ENCODE measurements at regions of chr12 and their contacts with region 1.

Region 1: DNA sequence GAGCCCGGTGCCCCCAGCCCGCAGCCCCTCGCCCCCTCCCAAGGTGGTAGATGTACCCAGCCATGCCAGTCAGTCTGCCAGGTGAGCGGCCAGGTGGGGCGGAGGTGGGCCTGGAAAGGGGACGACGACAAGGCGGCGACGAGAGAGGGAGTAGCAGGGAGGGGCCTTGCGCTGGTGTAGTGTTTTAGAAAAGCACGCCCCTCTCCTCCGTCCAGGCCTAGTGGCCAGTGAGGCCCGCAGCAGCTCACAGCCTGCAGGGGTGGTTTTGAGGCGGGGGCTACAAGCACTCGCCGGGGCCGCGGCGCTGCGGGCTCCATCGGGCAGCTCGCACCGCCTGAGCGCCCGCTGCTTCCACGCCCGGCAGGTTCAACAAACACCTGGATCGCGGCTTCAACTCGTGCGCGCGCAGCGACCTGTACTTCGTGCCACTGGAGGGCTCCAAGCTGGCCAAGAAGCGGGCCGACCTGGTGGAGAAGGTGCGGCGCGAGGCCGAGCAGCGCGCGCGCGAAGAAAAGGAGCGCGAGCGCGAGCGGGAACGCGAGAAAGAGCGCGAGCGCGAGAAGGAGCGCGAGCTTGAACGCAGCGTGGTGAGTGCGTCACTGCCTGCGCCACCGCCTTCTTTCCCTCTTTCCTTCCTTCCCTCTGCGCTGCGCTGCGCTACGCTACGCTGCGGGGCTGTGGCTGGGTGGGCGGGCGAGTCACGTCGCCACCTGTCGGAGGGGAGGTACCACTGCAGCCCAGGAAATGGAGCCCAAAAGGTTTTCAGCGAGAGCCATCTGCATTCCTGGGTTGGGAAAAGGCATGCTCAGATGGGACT is 5.9 kb upstream of the RNU7-1 start:
- DNase-seq: peak; percentile 86 to 99 (median 92)
- ATAC-seq: peak; percentile 91
- H3K4me3 ChIP-seq: peak overlapping the region; percentile 72
- H3K4me3 Mint-ChIP-seq: peak overlapping the region; percentile 90
- H3K27ac ChIP-seq: peak overlapping the region; percentile 89 to 92
- H3K27ac Mint-ChIP-seq: peak overlapping the region; percentile 95
- H3K4me1 ChIP-seq: peaks cover 47% of the 10 kb centered on the region
- H3K4me1 Mint-ChIP-seq: peaks cover 61% of the 10 kb centered on the region
- H3K27me3 ChIP-seq: no peaks in the 10 kb centered on the region
- H3K27me3 Mint-ChIP-seq: no peaks in the 10 kb centered on the region
- CTCF ChIP-seq: peak; percentile 89

Region 2: DNA sequence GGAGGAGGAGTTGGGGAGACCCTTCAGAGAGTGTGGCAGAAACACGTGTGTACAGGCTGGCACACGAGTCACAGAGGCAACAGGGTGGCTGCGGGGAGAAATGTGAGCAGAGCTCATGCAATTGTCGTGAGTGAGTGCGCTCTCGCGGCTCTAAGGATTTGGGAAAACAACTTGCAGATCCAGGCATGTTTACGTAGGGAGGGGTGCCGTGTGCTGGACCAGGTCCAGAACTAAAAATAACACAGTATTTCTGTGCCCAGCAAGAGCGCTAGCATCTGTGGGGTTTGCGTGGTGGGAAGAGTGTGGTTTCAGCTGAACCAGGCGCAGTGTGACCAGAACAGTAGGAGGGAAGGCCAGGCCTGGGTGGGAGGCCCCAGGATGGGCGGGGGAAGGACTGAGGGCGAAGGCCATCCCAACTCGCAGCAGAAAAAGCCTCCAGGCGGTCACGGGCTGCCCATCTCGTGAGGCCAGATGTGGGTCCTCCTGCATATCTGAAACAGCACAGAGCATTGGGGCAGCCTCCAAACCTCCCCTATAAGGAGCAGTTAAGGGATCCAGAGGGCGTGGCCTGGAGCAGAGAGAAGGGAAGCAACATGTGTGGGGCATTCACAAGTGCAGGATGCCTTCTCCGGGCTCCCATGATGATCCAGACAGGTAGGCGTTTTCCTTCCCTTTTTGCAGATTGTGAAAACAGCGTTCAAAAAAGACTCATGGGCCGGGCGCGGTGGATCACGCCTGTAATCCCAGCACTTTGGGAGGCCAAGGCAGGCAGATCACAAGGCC is 755.4 kb before region 1 on chr12:
- CTCF ChIA-PET with region 1: no interaction called
- POLR2A ChIA-PET with region 1: no interaction called
- intact Hi-C with region 1: no loop called
- DNase-seq: no peak
- ATAC-seq: no peak
- H3K4me3 ChIP-seq: no peak overlapping the region
- H3K4me3 Mint-ChIP-seq: no peak overlapping the region
- H3K27ac ChIP-seq: no peak overlapping the region
- H3K27ac Mint-ChIP-seq: no peak overlapping the region
- H3K4me1 ChIP-seq: no peaks in the 10 kb centered on the region
- H3K4me1 Mint-ChIP-seq: no peaks in the 10 kb centered on the region
- H3K27me3 ChIP-seq: peaks cover 0 to 4% of the 10 kb centered on the region in 2 experiments
- H3K27me3 Mint-ChIP-seq: no peaks in the 10 kb centered on the region
- CTCF ChIP-seq: no peak

Region 3: GRCh38 chr12:6723607-6724396 is 213.9 kb before region 1 on chr12 and contains the start of gene COPS7A:
- CTCF ChIA-PET with region 1: interaction called, 6 read pairs
- POLR2A ChIA-PET with region 1: interaction called, 10 read pairs
- intact Hi-C with region 1: no loop called
- DNase-seq: peak; percentile 81 to 99 (median 93)
- ATAC-seq: peak; percentile 84
- H3K4me3 ChIP-seq: peak within 1 kb of the TSS; percentile 59
- H3K4me3 Mint-ChIP-seq: peak within 1 kb of the TSS; percentile 87
- H3K27ac ChIP-seq: peak within 1 kb of the TSS; percentile 68 to 88
- H3K27ac Mint-ChIP-seq: peak within 1 kb of the TSS; percentile 83
- H3K4me1 ChIP-seq: peaks cover 18% of the 10 kb centered on the region
- H3K4me1 Mint-ChIP-seq: peaks cover 28% of the 10 kb centered on the region
- H3K27me3 ChIP-seq: no peaks in the 10 kb centered on the region
- H3K27me3 Mint-ChIP-seq: no peaks in the 10 kb centered on the region
- CTCF ChIP-seq: no peak
- total RNA-seq, gene COPS7A: 9.4 to 9.6 TPM

Region 4: DNA sequence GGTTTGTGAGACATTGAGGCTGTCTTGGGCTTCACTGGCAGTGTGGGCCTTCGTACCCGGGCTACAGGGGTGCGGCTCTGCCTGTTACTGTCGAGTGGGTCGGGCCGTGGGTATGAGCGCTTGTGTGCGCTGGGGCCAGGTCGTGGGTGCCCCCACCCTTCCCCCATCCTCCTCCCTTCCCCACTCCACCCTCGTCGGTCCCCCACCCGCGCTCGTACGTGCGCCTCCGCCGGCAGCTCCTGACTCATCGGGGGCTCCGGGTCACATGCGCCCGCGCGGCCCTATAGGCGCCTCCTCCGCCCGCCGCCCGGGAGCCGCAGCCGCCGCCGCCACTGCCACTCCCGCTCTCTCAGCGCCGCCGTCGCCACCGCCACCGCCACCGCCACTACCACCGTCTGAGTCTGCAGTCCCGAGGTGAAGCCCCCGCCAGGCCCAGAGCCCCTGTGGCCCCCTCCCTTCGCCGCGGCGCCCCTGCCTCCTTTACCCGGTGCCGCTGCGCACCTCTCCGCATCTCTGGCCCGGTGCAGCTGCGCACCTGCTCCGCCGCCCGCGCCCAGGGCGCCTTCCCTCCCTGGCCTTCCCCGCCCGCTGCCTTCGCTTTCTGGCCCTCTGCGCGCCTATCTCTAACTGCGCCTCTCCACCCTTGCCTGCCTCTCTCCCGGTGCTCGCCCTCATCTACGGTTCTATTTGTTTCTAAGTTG is 23.3 kb before region 1 on chr12 and contains the start of gene ENO2:
- CTCF ChIA-PET with region 1: interaction called, 13 read pairs
- POLR2A ChIA-PET with region 1: interaction called, 35 read pairs
- intact Hi-C with region 1: no loop called
- DNase-seq: peak; percentile 72 to 93 (median 86)
- ATAC-seq: peak; percentile 93
- H3K4me3 ChIP-seq: peak within 1 kb of the TSS; percentile 65
- H3K4me3 Mint-ChIP-seq: peak within 1 kb of the TSS; percentile 94
- H3K27ac ChIP-seq: peak within 1 kb of the TSS; percentile 84 to 90
- H3K27ac Mint-ChIP-seq: peak within 1 kb of the TSS; percentile 82
- H3K4me1 ChIP-seq: peaks cover 32% of the 10 kb centered on the region
- H3K4me1 Mint-ChIP-seq: peaks cover 31% of the 10 kb centered on the region
- H3K27me3 ChIP-seq: no peaks in the 10 kb centered on the region
- H3K27me3 Mint-ChIP-seq: no peaks in the 10 kb centered on the region
- CTCF ChIP-seq: no peak
- total RNA-seq, gene ENO2: 85.6 to 103 TPM

Region 5: GRCh38 chr12:6953442-6954315 is 16.0 kb after region 1 on chr12:
- CTCF ChIA-PET with region 1: interaction called, 324 read pairs
- POLR2A ChIA-PET with region 1: interaction called, 963 read pairs
- intact Hi-C with region 1: no loop called
- DNase-seq: peak in 13 of 14 experiments; percentile 50 to 90 (median 69)
- ATAC-seq: peak; percentile 45
- H3K4me3 ChIP-seq: peak overlapping the region; percentile 98
- H3K4me3 Mint-ChIP-seq: peak overlapping the region; percentile 100
- H3K27ac ChIP-seq: peak overlapping the region; percentile 80 to 96
- H3K27ac Mint-ChIP-seq: peak overlapping the region; percentile 97
- H3K4me1 ChIP-seq: peaks cover 94% of the 10 kb centered on the region
- H3K4me1 Mint-ChIP-seq: peaks cover 89% of the 10 kb centered on the region
- H3K27me3 ChIP-seq: no peaks in the 10 kb centered on the region
- H3K27me3 Mint-ChIP-seq: no peaks in the 10 kb centered on the region
- CTCF ChIP-seq: no peak

Region 6: GRCh38 chr12:6965026-6965661 is 27.5 kb after region 1 on chr12:
- CTCF ChIA-PET with region 1: interaction called, 324 read pairs
- POLR2A ChIA-PET with region 1: interaction called, 963 read pairs
- intact Hi-C with region 1: loop called in 1 of 2 experiments (anchors 5 kb)
- DNase-seq: peak; percentile 83 to 96 (median 86)
- ATAC-seq: peak; percentile 50
- H3K4me3 ChIP-seq: no peak overlapping the region
- H3K4me3 Mint-ChIP-seq: peak overlapping the region; percentile 79
- H3K27ac ChIP-seq: peak overlapping the region; percentile 38 to 39
- H3K27ac Mint-ChIP-seq: peak overlapping the region; percentile 90
- H3K4me1 ChIP-seq: peaks cover 70% of the 10 kb centered on the region
- H3K4me1 Mint-ChIP-seq: peaks cover 58% of the 10 kb centered on the region
- H3K27me3 ChIP-seq: no peaks in the 10 kb centered on the region
- H3K27me3 Mint-ChIP-seq: no peaks in the 10 kb centered on the region
- CTCF ChIP-seq: peak; percentile 94

Region 7: GRCh38 chr12:7060353-7060954 is 122.8 kb after region 1 on chr12 and contains the start of gene C1S:
- CTCF ChIA-PET with region 1: no interaction called
- POLR2A ChIA-PET with region 1: no interaction called
- intact Hi-C with region 1: no loop called
- DNase-seq: no peak
- ATAC-seq: no peak
- H3K4me3 ChIP-seq: no peak within 1 kb of the TSS
- H3K4me3 Mint-ChIP-seq: no peak within 1 kb of the TSS
- H3K27ac ChIP-seq: no peak within 1 kb of the TSS
- H3K27ac Mint-ChIP-seq: no peak within 1 kb of the TSS
- H3K4me1 ChIP-seq: no peaks in the 10 kb centered on the region
- H3K4me1 Mint-ChIP-seq: no peaks in the 10 kb centered on the region
- H3K27me3 ChIP-seq: peaks cover 7 to 12% of the 10 kb centered on the region in 2 experiments
- H3K27me3 Mint-ChIP-seq: peaks cover 34% of the 10 kb centered on the region
- CTCF ChIP-seq: no peak
- total RNA-seq, gene C1S: 3.8 to 4.6 TPM